GM23248 (cell line): ENCODE measurements at regions of chr5 and their contacts with region 1.

Region 1: GRCh38 chr5:88680253-88681132 is 202.5 kb downstream of the MEF2C start:
- DNase-seq: peak; percentile 74
- H3K4me3 ChIP-seq: peak overlapping the region; percentile 62
- H3K27ac ChIP-seq: no peak overlapping the region
- H3K4me1 ChIP-seq: no peaks in the 10 kb centered on the region
- H3K27me3 ChIP-seq: peaks cover 92% of the 10 kb centered on the region

Region 2: DNA sequence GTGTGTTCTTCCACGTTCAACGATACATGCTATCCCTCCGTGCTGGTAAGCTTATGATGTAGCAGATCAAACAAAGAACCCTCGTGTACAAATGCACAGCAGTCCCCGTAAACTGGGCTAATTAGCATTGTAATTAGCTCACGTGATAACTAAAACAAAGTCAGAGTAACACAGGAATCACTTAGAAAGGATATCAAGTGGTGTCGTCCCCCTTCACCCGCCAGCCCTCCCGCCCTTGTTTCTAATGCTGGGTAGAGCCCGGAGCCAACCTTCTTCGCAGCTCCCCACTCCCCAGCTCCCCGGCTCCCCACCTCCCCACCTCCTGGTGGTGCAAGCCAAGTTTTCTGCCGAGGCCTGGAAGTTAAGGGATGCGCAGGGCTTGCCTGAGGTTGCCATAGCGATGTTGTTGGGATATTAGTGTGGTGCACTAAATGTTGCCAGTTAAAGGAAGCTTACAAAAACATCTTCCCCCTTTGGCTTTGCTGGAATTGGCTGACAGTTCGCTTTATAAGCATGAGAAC is 909.8 kb before region 1 on chr5:
- in situ Hi-C with region 1: loop called (anchors 10 kb)
- DNase-seq: no peak
- H3K4me3 ChIP-seq: no peak overlapping the region
- H3K27ac ChIP-seq: no peak overlapping the region
- H3K4me1 ChIP-seq: no peaks in the 10 kb centered on the region
- H3K27me3 ChIP-seq: no peaks in the 10 kb centered on the region